Mammary epithelial cell (primary cell): ENCODE measurements at regions of chr1 and their contacts with region 1.

Region 1: GRCh38 chr1:177847843-177848242 is 122.0 kb downstream of the SEC16B start:
- DNase-seq: peak; percentile 92
- H3K4me3 ChIP-seq: no peak overlapping the region
- H3K27ac ChIP-seq: peak overlapping the region; percentile 69
- H3K4me1 ChIP-seq: peaks cover 24% of the 10 kb centered on the region
- H3K27me3 ChIP-seq: no peaks in the 10 kb centered on the region
- CTCF ChIP-seq: no peak

Region 2: GRCh38 chr1:177729646-177730045 is 118.2 kb before region 1 on chr1:
- CTCF ChIA-PET with region 1: no interaction called
- dilution Hi-C with region 1: no loop called
- in situ Hi-C with region 1: no loop called
- intact Hi-C with region 1: no loop called
- DNase-seq: no peak
- H3K4me3 ChIP-seq: no peak overlapping the region
- H3K27ac ChIP-seq: no peak overlapping the region
- H3K4me1 ChIP-seq: no peaks in the 10 kb centered on the region
- H3K27me3 ChIP-seq: no peaks in the 10 kb centered on the region
- CTCF ChIP-seq: no peak

Region 3: GRCh38 chr1:177800400-177801088 is 47.3 kb before region 1 on chr1:
- CTCF ChIA-PET with region 1: no interaction called
- dilution Hi-C with region 1: no loop called
- in situ Hi-C with region 1: no loop called
- intact Hi-C with region 1: loop called (anchors 2 kb)
- DNase-seq: peak; percentile 86
- H3K4me3 ChIP-seq: no peak overlapping the region
- H3K27ac ChIP-seq: no peak overlapping the region
- H3K4me1 ChIP-seq: peaks cover 22% of the 10 kb centered on the region
- H3K27me3 ChIP-seq: no peaks in the 10 kb centered on the region
- CTCF ChIP-seq: no peak

Region 4: DNA sequence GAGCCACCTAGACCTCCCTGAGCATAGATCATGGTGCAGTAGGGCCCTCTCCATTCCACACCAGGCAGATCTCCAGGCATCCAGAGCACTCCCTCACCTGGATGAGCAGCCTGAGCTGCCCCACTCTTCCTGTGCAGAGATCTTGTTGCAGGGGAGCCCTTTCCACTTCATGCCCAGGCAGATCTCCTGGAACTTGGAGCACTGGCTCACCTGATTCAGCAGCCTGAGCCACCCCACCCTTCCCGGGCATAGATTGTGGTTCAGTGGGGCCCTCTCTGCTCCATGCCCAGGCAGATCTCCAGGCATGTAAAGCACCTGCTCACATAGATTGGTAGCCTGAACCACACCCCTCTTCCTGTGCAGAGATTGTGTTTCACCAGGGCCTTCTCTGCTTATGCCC is 44.0 kb after region 1 on chr1:
- CTCF ChIA-PET with region 1: no interaction called
- dilution Hi-C with region 1: no loop called
- in situ Hi-C with region 1: no loop called
- intact Hi-C with region 1: loop called (anchors 2 kb)
- DNase-seq: peak; percentile 85
- H3K4me3 ChIP-seq: no peak overlapping the region
- H3K27ac ChIP-seq: no peak overlapping the region
- H3K4me1 ChIP-seq: peaks cover 13% of the 10 kb centered on the region
- H3K27me3 ChIP-seq: no peaks in the 10 kb centered on the region
- CTCF ChIP-seq: no peak

Region 5: GRCh38 chr1:178134061-178134460 is 286.2 kb after region 1 on chr1:
- CTCF ChIA-PET with region 1: no interaction called
- dilution Hi-C with region 1: no loop called
- in situ Hi-C with region 1: no loop called
- intact Hi-C with region 1: no loop called
- DNase-seq: peak; percentile 54
- H3K4me3 ChIP-seq: no peak overlapping the region
- H3K27ac ChIP-seq: peak overlapping the region; percentile 15
- H3K4me1 ChIP-seq: peaks cover 19% of the 10 kb centered on the region
- H3K27me3 ChIP-seq: no peaks in the 10 kb centered on the region
- CTCF ChIP-seq: no peak